H1 (cell line): ENCODE measurements at regions of chr11 and their contacts with region 1.

Region 1: GRCh38 chr11:1546536-1547400 is 25.3 kb downstream of the DUSP8 start:
- DNase-seq: peak in 1 of 2 experiments; percentile 86
- H3K4me3 ChIP-seq: peak overlapping the region; percentile 26 to 64 (median 36)
- H3K27ac ChIP-seq: no peak overlapping the region
- H3K4me1 ChIP-seq: peaks cover 3 to 30% (median 13%) of the 10 kb centered on the region in 4 experiments
- H3K27me3 ChIP-seq: peaks cover 15 to 58% (median 43%) of the 10 kb centered on the region in 4 experiments
- CTCF ChIP-seq: peak in 2 of 3 experiments; percentile 70 to 87; a peak in 3 of 4 replicates
- EP300 ChIP-seq: peak; percentile 2 to 69
- POLR2A ChIP-seq: no peak
- RAD21 ChIP-seq: peak; percentile 73 to 89

Region 2: GRCh38 chr11:1472178-1473002 is 74.4 kb before region 1 on chr11:
- CTCF ChIA-PET with region 1: no interaction called
- POLR2A ChIA-PET with region 1: no interaction called
- DNase-seq: no peak
- H3K4me3 ChIP-seq: no peak overlapping the region
- H3K27ac ChIP-seq: no peak overlapping the region
- H3K4me1 ChIP-seq: no peaks in the 10 kb centered on the region; a peak in 1 of 7 replicates
- H3K27me3 ChIP-seq: no peaks in the 10 kb centered on the region
- CTCF ChIP-seq: no peak
- EP300 ChIP-seq: no peak
- POLR2A ChIP-seq: no peak
- RAD21 ChIP-seq: no peak

Region 3: DNA sequence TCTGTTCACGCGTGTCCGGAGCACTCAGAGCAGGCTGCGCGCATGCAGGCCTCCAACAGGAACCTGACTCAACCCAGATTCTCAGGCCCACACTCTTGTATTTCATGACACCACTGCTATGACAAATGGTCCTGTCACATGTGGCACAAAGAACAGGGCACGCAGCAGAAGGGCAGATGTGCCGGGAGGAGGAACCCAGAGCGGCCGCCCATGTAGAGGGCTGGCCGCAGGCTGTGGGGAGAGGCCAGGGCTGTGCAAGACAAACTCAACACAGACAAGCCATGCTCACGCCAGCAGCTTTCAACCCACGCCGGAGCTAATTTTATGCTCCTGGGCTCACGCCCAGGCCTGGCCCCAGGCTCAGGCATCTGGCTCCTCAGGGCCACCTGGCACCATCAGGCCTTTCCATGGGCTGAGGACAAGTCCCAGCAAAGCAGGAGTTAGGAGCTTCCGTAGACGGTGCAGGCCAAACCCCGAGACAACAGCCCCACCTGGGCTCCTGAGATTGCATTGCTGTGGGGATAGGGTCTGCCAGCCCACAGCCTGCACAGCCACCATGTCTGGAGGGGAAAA is 14.7 kb before region 1 on chr11:
- CTCF ChIA-PET with region 1: interaction called, 12 read pairs
- POLR2A ChIA-PET with region 1: interaction called, 3 read pairs
- DNase-seq: no peak
- H3K4me3 ChIP-seq: no peak overlapping the region
- H3K27ac ChIP-seq: no peak overlapping the region
- H3K4me1 ChIP-seq: peaks cover 0 to 2% (median 0%) of the 10 kb centered on the region in 4 experiments; a peak in 1 of 7 replicates
- H3K27me3 ChIP-seq: no peaks in the 10 kb centered on the region
- CTCF ChIP-seq: no peak
- EP300 ChIP-seq: no peak
- POLR2A ChIP-seq: no peak
- RAD21 ChIP-seq: no peak

Region 4: GRCh38 chr11:1559119-1559951 is 12.6 kb after region 1 on chr11:
- CTCF ChIA-PET with region 1: interaction called, 64 read pairs
- POLR2A ChIA-PET with region 1: interaction called, 60 read pairs
- DNase-seq: peak in 1 of 2 experiments; percentile 80
- H3K4me3 ChIP-seq: peak overlapping the region in 2 of 4 experiments; percentile 5 to 14; a peak in 1 of 8 replicates
- H3K27ac ChIP-seq: no peak overlapping the region
- H3K4me1 ChIP-seq: peaks cover 8 to 53% (median 41%) of the 10 kb centered on the region in 4 experiments
- H3K27me3 ChIP-seq: peaks cover 18 to 49% (median 41%) of the 10 kb centered on the region in 4 experiments
- CTCF ChIP-seq: no peak
- EP300 ChIP-seq: no peak; a peak in 1 of 3 replicates
- POLR2A ChIP-seq: no peak
- RAD21 ChIP-seq: peak in 1 of 2 experiments; percentile 3; a peak in 1 of 4 replicates

Region 5: DNA sequence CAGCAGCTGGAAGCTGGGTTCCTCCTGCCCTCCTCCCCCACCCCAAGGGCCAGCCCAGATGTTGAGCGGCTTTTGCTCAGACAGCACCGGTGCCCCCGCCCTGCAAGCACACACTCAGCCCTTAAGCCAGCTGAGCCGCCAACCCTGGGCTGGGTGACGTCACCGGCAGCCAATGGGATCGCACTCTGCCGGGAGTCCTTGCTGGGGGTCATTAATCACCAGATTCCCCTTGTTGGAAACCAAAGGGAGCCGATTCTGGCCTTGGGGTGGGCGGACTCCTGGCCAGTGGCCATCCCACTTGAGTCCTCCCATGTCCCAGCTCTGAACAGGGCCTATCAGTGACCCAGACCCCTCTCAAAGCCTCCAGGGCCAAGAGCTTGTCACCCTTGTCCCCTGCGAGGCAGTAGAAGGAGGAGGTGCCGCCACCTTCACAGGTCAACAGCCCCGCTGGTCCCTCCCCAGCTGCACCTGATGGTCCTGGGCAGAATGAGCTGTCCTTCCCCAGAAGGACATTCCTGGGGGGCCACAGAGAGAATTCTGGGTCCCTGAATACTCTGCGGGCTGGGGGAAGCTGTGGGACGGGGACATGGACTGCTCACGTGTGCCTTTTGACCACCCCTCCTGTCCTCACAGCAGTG is 17.9 kb after region 1 on chr11:
- CTCF ChIA-PET with region 1: interaction called, 64 read pairs
- POLR2A ChIA-PET with region 1: interaction called, 60 read pairs
- DNase-seq: peak in 1 of 2 experiments; percentile 90
- H3K4me3 ChIP-seq: peak overlapping the region in 1 of 4 experiments; percentile 8; a peak in 2 of 8 replicates
- H3K27ac ChIP-seq: no peak overlapping the region
- H3K4me1 ChIP-seq: peaks cover 0 to 46% (median 31%) of the 10 kb centered on the region in 4 experiments; a peak in 6 of 7 replicates
- H3K27me3 ChIP-seq: peaks cover 0 to 11% (median 6%) of the 10 kb centered on the region in 4 experiments; a peak in 4 of 7 replicates
- CTCF ChIP-seq: no peak
- EP300 ChIP-seq: no peak
- POLR2A ChIP-seq: no peak
- RAD21 ChIP-seq: no peak

Region 6: GRCh38 chr11:1598816-1599215 is 52.0 kb after region 1 on chr11:
- CTCF ChIA-PET with region 1: interaction called, 30 read pairs
- POLR2A ChIA-PET with region 1: no interaction called
- DNase-seq: no peak
- H3K4me3 ChIP-seq: no peak overlapping the region
- H3K27ac ChIP-seq: no peak overlapping the region
- H3K4me1 ChIP-seq: peaks cover 2 to 13% (median 5%) of the 10 kb centered on the region in 4 experiments
- H3K27me3 ChIP-seq: peaks cover 0 to 4% (median 0%) of the 10 kb centered on the region in 4 experiments; a peak in 1 of 7 replicates
- CTCF ChIP-seq: no peak
- EP300 ChIP-seq: no peak
- POLR2A ChIP-seq: no peak
- RAD21 ChIP-seq: no peak

Region 7: DNA sequence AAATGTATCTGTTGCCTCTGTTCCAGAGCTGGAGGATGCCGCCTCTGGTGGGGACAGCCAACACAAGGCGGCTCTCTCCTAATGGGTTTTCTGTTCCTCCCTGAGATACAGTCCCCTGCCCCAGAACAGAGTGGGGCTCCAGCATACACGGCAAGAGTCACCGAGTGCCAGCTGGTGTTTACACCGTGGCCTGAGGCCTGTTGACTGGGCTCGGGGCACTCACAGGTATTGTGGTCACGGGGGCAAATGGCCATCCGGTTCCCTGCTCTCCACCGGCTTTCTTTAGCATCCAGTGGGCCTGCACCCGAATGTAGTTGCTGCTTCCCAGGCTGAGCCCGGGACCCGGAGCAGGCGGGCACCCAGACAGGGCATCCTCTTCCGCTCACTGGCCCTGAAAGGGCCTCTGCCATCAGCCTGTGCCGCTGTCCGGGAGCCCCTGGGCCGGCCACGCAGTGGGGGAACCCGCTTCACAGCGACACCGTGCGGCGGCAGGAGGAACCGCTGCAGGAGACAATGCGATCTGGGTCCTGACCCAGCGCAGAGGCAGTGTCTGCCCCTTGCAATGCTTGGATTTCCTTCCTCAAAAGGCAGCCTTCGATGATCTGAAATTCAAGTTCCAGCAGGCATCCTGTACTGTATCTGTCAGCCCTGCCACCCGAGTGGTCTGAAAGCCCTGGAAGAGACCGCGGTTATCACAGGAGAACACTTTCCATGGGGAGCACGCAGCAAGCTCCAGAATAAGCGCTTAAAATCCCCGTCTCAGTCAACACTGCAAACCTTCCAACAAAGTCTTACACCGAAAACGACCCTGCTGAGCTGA is 81.9 kb after region 1 on chr11:
- CTCF ChIA-PET with region 1: interaction called, 15 read pairs
- POLR2A ChIA-PET with region 1: no interaction called
- DNase-seq: peak; percentile 46 to 93
- H3K4me3 ChIP-seq: no peak overlapping the region
- H3K27ac ChIP-seq: no peak overlapping the region
- H3K4me1 ChIP-seq: peaks cover 0 to 4% (median 1%) of the 10 kb centered on the region in 4 experiments; a peak in 5 of 7 replicates
- H3K27me3 ChIP-seq: peaks cover 0 to 16% (median 3%) of the 10 kb centered on the region in 4 experiments; a peak in 5 of 7 replicates
- CTCF ChIP-seq: peak; percentile 90 to 100 (median 98)
- EP300 ChIP-seq: no peak
- POLR2A ChIP-seq: no peak
- RAD21 ChIP-seq: peak; percentile 58 to 71

Region 8: GRCh38 chr11:1728931-1729691 is 182.3 kb after region 1 on chr11:
- CTCF ChIA-PET with region 1: no interaction called
- POLR2A ChIA-PET with region 1: no interaction called
- DNase-seq: no peak
- H3K4me3 ChIP-seq: no peak overlapping the region
- H3K27ac ChIP-seq: no peak overlapping the region
- H3K4me1 ChIP-seq: no peaks in the 10 kb centered on the region
- H3K27me3 ChIP-seq: peaks cover 0 to 5% (median 1%) of the 10 kb centered on the region in 4 experiments; a peak in 2 of 7 replicates
- CTCF ChIP-seq: no peak
- EP300 ChIP-seq: no peak
- POLR2A ChIP-seq: no peak
- RAD21 ChIP-seq: no peak